ENCODE measurements at regions of chr15 and their contacts with region 1.

Region 1: GRCh38 chr15:38699633-38700230 is 135.1 kb upstream of the RASGRP1 start:
- DNase-seq: peak; percentile 60
- CTCF ChIP-seq: peak; percentile 93

Region 2: DNA sequence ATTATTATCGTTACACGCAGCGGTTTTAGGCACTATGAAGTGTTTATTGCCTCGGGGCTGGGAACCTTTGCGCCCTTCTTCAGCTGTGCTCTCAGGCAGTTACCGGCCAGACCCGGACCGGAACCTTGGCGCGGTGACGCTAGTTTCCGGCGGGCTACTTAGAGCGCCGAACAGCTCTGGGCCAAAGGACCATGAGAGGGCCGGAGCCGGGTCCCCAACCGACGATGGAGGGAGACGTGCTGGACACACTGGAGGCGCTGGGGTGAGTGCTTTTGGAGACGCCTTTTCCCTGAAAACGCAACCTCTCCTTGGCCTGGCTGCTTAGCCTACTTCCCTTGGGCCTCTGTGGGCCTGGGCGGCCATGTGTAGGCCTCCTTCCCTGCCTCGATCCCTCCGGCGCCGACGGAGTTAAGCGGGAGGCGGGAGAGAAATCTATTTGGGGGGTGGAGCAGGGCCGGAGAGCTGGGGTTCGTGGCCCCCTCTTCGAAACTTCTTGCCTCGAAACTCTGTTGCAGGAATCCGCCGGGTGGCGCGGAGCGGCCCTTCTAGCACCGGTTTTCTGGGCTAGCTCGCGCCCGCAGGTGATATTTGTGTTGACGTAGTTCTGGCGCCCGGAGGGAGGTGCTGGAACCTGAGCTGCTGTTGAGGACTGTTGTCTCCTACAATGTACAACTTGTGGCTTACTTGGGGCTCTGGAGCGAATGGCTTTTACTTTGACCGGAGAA is 245.6 kb before region 1 on chr15 and contains the start of gene FAM98B:
- CTCF ChIA-PET with region 1: interaction called, 23 read pairs
- POLR2A ChIA-PET with region 1: no interaction called
- DNase-seq: peak; percentile 84
- CTCF ChIP-seq: no peak

Region 3: GRCh38 chr15:38512901-38513300 is 186.8 kb before region 1 on chr15:
- CTCF ChIA-PET with region 1: interaction called, 19 read pairs
- POLR2A ChIA-PET with region 1: no interaction called
- DNase-seq: no peak
- CTCF ChIP-seq: no peak

Region 4: DNA sequence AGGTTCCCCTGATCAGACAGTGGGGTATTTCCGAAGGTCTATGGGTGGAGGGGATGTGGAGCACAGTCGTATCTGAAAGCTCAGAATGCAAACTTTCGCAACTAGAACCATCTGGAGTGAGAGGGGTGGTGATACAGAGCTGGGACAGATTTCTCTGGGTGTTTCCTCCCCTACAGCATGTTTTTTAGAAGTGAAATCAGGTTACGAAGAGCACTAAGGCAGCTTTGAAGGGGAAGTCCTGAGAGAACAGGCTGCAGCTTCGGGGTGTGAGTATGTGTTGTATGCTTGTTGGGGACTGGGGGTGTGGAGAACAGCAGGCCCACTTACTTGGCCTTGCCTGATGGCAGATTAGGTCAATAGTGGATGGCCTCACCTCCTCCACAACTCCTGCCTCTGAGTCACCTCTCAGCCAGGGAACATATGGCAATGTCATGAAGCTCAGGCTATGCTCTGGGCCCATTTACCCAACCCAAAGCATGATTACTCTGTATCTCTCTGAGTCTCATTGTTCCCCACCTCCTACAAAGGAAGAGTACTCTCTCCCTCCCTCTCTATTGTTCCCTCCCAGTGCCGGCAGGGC is 28.0 kb before region 1 on chr15:
- CTCF ChIA-PET with region 1: interaction called, 32 read pairs
- POLR2A ChIA-PET with region 1: interaction called, 3 read pairs
- DNase-seq: no peak
- CTCF ChIP-seq: peak; percentile 0